ENCODE measurements at regions of chr1 and their contacts with region 1.

Region 1: DNA sequence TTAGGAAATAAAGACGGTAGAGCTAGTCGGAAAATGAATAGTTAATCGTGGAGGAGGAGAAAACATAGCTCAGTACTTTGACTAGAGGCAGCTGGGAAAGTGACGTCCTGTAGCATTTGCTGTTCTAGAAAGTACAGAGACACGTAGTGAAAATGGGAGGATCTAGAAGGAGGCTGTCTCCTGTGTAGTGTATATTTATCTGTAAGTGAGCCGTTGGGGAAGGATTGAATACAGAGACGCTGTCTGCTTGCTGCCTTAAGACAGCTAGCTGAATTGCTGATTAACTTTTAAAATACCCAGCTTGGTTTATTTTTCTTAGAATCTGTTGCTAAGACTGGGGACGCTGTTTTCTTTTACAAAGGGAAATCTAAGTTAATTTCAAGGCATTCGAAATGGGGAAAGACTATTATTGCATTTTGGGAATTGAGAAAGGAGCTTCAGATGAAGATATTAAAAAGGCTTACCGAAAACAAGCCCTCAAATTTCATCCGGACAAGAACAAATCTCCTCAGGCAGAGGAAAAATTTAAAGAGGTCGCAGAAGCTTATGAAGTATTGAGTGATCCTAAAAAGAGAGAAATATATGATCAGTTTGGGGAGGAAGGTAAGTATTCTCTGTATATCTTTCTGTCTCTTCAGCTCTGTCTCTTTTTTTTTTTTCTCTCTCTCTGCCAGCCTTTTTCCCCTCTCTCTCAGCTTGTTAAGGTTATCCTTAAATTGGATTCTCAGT is at the start of gene DNAJB4:
- DNase-seq: no peak
- ATAC-seq: peak; percentile 100
- total RNA-seq, gene DNAJB4: 88.0 TPM

Region 2: GRCh38 chr1:77095233-77095632 is 909.6 kb before region 1 on chr1:
- intact Hi-C with region 1: no loop called
- DNase-seq: no peak
- ATAC-seq: no peak

Region 3: GRCh38 chr1:77961392-77961791 is 43.5 kb before region 1 on chr1:
- intact Hi-C with region 1: no loop called
- DNase-seq: no peak
- ATAC-seq: no peak

Region 4: DNA sequence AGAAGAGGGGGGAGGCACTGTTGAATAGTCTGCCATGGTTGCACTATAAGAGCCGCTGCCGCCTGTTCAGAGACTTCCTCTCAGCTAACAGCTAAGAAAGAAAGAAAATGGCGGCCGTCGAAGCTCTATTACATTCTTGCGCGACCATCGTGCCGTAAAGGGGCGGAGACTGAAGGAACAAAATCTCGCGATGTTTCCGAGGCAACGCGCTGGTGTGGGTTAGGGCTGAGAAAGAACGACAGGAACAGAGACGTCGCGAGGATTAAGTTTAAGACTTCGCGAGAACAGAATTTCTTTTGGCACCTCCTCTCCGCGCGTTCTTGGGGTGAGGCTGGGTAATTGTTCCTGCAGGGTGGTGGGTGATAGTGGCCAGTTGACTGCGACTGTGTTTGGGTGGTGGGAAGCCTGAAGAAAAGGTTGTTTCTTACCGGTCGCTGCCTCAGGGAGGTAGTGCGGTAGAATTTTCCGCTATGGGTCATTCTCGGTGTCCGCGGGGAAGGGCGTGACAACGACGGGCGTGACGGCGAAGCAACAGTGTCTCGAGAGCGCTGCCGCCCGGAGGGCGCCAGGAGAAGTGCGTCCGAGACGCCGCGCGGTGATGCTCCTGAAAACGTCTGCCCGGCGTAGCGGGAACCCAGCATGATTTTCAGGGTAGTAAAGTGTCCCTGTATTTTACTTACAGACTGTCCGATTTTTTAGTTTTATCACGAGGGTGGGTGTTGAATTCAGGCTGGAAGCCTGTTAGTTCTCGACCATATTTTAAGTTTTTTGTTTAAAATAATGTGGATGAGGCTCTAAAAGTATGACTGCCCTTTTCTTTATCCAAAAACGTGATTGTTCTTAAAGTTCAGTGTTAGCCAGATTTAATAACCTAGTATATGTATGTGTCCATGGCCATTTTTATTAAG is 25.7 kb before region 1 on chr1 and contains the start of gene FUBP1:
- intact Hi-C with region 1: loop called (anchors 1 kb)
- DNase-seq: peak; percentile 95
- ATAC-seq: peak; percentile 92
- total RNA-seq, gene FUBP1: 48.9 TPM

Region 5: DNA sequence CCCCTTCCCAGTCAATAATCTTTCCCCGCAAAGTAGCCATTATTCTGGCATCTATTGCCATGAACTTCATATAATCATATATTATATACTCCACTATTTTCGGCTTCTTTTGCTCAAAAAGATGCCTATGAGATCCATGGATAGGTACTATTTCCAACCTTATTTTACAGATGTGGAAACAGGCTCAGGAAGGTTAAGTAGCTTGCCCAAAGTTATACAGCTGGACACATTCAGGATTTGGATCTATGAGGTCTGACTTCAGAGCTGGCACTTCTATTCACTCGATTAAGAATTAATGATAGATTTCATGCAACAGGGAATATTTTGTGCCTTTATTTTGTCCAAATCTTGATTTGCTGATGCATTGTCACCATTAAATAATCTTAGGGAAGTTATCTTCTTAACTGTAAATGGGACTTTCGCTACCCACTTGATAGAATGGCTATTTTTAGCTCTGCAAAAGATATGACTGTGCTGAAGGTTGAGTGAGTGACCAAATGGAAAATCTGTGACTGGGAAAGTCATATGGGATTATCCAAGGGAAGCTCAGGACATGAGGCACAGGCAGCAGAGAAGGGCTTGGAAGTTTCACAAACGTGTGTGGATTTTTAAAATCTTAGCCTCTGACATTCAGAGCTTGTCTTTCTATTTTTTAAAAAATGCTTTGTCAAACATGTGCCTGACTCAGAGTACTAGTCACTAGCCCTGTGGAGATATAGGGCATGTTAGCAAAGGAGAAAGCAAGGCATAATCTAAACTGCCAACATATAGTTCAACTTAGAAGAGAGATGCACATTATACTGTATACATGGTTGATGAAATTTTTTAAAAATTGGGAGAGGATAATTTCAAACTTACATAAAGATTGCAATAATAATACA is 77.3 kb after region 1 on chr1:
- intact Hi-C with region 1: no loop called
- DNase-seq: no peak
- ATAC-seq: peak; percentile 94

Region 6: DNA sequence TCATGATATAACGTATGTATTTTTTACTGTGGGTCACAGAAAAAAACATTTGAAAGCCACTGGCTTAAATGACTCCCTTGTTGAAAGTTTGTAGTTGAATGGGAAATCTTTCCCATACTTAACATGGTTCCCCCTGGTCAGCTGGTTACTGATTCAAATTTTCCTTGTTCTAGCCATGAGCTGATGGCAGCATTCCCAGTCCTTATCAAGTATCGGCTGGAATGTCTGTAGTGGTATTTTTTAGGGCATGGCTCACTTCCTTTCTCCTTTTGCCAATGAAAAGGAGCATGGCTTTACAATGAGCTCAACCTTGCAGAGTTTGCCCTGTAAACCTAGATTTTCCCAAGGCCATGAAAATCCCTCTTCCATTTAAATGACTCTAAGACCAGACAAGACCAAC is 96.6 kb after region 1 on chr1:
- intact Hi-C with region 1: loop called (anchors 5 kb)
- DNase-seq: no peak
- ATAC-seq: peak; percentile 70

Region 7: GRCh38 chr1:78340006-78340405 is 335.1 kb after region 1 on chr1:
- intact Hi-C with region 1: no loop called
- DNase-seq: no peak
- ATAC-seq: no peak

Measured in Right ventricle myocardium inferior (tissue), 1 donor.